KBM-7 (cell line): ENCODE measurements at regions of chr1 and their contacts with region 1.

Region 1: GRCh38 chr1:1231400-1232223 is at the start of gene SDF4:
- DNase-seq: peak; percentile 96

Region 2: DNA sequence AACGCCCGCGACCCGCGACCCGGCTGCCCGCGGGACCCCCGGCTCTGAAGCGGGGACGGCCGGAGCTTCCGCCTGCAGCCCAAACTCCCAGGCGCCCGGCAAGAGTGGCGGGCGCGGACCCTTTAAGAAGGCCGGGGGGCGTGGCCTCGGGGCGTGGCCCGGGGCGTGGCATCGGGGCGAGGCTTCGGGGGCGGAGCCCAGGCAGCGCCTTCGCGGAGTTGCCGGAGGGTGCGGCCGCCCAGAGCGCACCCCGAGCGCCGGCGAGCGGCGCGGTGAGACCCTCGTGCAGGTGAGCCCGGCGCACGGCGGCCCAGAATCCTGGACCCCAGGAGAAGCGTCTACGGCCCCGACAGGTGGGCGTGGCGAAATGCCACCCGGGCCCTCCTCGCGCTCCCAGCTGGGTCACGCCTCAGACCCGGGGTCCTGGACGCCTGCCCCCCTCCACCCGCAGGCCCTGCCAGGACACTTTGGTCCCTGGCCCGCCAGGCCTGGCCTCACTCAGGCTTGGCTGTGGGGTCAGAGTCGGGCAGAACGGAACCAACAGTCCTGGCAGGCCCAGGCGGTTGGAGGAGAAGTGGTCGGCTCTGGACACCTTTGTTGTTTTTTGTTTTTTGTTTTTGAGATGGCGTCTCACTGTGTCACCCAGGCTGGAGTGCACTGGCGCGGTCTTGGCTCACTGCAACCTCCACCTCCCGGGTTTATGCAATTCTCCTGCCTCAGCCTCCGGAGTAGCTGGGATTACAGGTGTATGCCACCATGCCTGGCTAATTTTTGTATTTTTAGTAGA is 171.9 kb before region 1 on chr1:
- in situ Hi-C with region 1: no loop called
- DNase-seq: peak; percentile 81

Region 3: DNA sequence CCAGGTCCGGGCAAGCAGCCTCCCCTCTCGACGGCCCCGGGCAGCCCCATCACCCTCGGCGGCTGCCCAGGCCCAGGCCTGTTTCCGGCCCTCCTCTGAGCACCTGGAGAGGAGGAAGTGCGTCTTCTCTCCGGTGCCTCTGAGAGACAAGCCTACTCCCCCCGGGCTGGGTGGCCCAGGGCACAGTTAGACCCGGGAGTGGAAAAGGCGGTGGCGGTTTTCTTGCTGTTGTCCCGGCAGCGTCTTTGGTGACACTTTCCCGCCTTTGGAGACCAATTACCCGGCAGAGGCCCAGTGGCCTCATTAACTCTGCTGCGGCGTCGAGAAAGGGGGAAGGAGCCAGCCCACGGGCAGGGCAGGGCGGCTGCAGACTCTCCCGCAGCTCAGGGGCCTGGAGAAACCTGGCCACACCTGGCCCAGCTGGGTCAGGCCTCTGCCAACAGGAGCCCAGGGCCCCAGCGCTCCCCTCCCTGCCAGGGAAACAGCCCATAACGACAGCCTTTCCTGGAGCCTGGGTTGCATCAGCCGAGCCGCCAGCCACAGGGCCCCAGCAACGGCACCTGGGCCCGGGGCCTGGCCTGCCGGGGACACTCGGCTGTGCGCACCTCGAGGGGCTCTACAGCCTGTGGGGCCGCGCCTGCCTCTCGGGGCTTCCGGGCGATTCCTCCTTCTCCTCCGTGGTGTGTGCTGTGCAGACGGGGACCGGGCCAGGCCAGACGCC is 87.3 kb before region 1 on chr1:
- in situ Hi-C with region 1: loop called (anchors 25 kb)
- DNase-seq: peak; percentile 84